ENCODE measurements at regions of chr5 and their contacts with region 1.

Region 1: DNA sequence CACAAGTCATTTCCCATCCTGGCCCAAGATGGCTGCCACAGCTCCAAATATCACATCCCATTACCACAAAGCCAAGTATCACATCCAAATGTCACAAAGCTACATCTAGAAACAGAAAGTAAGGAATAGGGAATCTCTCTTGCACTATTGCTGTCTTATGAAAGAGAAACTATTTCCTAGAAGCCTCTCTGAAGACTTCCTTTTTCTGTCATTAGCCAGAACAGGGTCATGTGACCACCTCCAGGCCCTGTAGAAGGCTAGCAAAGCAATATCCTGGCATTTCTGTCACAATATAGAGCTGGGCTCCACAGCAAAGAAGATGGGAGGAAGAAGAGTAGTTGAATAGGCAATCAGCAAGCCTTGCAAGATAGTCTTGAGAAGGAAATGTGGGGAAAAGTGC is 99.2 kb downstream of the SH3TC2 start:
- DNase-seq: no peak
- H3K4me3 ChIP-seq: no peak overlapping the region
- H3K27me3 ChIP-seq: no peaks in the 10 kb centered on the region
- CTCF ChIP-seq: no peak

Region 2: DNA sequence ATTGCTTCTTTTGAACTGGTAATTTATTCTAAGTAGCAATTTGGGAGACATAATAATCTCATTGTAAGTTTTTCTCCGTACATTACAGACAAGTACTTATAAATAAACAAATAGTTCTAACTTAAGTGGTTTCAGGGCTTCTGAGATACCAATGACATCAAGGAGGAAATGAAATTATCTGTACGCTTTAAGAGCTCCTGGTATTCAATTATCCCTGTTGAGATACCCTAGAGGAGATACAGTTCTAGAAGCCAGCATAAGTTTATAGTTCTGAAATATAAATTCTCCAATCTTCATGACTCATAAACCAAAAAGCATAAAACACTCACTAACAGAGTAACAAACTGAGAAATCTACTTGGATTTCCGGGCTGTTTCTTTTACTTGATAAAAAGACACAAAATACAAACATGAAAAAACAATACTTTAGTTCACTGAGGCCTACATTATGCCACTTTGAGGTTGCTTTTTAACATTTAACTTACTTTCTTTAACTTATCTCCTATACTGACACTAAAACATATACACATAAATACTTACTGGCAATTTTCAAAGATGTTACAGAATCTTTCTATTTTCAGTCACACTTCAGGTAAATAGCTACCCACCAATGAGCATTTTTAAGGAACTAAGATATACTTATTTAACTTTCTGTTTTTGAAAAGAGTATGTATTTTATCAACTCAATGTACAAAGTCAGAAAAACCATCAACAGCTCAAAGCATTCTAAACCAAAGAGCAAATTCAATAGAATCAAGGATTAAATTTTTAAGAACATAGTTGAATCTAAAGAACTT is 1787.6 kb after region 1 on chr5:
- CTCF ChIA-PET with region 1: no interaction called
- POLR2A ChIA-PET with region 1: interaction called, 15 read pairs
- DNase-seq: no peak
- H3K4me3 ChIP-seq: no peak overlapping the region
- H3K27me3 ChIP-seq: no peaks in the 10 kb centered on the region
- CTCF ChIP-seq: no peak